ENCODE measurements at regions of chr11 and their contacts with region 1.

Region 1: GRCh38 chr11:66429983-66430602 is 8.6 kb downstream of the MRPL11 start:
- DNase-seq: peak; percentile 39
- H3K4me3 ChIP-seq: no peak overlapping the region
- H3K27ac ChIP-seq: no peak overlapping the region
- H3K4me1 ChIP-seq: no peaks in the 10 kb centered on the region
- H3K27me3 ChIP-seq: no peaks in the 10 kb centered on the region
- CTCF ChIP-seq: peak; percentile 80 to 89

Region 2: DNA sequence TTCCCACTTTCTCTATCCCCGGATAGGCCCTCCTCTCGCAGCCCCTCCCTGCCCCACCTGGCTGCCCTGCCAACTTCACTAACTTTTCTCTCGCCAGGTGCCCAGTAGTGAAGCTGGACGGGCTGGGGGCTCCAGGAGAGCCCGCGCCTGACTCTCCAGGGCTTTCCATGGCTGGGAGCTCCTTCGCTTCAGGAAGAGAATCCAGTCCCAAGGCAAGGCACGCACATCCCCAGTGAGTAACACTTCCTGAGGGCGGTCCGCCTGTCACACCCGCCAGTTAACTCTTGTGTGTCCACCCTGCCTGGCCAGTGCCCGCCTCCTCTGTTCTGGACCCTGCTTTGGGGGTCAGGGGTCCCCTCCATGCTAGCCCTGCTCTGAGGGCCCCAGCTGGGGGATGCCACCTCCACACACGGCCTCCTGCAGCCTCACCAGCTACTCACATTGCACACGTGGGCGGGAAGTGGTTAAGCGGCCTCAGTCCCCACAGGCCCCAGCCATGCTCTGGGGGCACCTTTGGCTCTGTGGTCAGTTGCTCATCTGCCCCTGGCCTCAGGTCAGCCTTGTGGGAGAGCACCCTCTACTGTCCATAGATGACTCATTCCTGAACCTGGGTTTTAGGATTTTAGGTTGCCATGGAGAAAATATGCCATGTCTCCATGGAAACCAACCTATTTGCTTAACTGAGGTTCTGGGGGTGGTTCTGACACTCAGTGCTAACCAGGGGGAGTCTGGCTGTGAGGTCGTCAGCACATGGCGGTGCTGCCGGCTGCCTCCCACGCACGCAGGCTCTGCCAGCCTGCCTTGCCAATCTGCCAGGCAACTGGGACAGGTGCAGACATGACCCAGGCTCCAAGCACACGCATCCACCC is 93.6 kb before region 1 on chr11 and contains the start of gene RIN1:
- CTCF ChIA-PET with region 1: no interaction called
- dilution Hi-C with region 1: loop called (anchors 5 kb)
- in situ Hi-C with region 1: no loop called
- intact Hi-C with region 1: no loop called
- DNase-seq: peak; percentile 99
- H3K4me3 ChIP-seq: peak within 1 kb of the TSS; percentile 40 to 78 (median 70)
- H3K27ac ChIP-seq: peak within 1 kb of the TSS; percentile 87
- H3K4me1 ChIP-seq: peaks cover 52% of the 10 kb centered on the region
- H3K27me3 ChIP-seq: no peaks in the 10 kb centered on the region
- CTCF ChIP-seq: peak in 1 of 2 donors; percentile 19
- total RNA-seq, gene RIN1: 28.5 to 75.6 TPM

Region 3: DNA sequence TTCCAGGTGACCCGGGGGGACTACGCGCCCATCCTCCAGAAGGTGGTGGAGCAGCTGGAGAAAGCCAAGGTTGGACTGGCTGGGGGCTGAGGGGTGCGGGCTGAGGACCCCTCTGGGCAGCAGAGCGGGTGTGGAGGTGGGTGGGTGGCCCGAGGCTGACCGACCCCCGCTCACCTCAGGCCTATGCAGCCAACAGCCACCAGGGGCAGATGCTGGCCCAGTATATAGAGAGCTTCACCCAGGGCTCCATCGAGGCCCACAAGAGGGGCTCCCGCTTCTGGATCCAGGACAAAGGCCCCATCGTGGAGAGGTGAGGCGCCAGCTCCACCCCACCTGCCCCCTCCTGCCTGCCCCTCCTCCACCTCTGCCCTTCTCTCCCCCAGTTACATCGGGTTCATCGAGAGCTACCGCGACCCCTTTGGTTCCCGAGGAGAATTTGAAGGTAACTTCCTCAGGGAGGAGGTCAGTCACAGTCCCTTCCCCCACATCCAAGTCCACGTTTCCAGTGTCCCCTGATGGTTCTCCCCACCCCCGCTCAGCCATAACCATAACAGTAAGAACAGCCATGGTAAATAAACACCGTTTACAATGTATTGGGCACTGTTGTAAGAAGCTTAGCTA is 61.3 kb after region 1 on chr11:
- CTCF ChIA-PET with region 1: no interaction called
- dilution Hi-C with region 1: loop called (anchors 5 kb)
- in situ Hi-C with region 1: no loop called
- intact Hi-C with region 1: no loop called
- DNase-seq: no peak
- H3K4me3 ChIP-seq: no peak overlapping the region
- H3K27ac ChIP-seq: no peak overlapping the region
- H3K4me1 ChIP-seq: no peaks in the 10 kb centered on the region
- H3K27me3 ChIP-seq: no peaks in the 10 kb centered on the region
- CTCF ChIP-seq: peak in 1 of 2 donors; percentile 10